ENCODE measurements at regions of chr14 and their contacts with region 1.

Region 1: DNA sequence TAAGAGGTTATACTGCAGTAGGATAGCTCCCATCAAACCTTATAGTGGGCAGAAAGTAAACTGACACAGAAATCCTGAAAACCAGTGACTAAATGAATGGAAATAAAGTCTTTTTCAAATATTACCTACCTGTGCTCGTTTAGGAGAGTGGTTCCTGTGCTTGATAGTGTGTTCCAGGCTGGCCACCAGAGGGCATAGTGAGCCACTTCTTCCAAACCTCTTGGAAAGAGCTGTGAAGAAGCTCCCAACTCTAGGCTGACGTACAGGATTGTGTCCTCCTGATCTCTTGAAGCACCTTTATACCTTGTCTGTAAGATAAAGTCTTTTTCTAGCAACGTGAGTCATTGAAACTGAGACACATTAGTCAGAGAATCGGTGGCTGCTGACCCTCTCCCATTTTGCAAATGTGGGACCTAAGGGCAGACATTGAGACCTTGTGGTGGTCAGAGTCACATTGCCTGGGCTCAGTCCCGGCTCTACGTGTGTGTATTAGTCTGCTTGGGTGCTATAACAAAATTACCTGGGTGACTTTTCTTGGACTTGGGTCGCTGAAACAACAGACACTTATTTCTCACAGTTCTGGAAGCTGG is 17.6 kb downstream of the TDP1 start:
- DNase-seq: no peak
- H3K4me3 ChIP-seq: no peak overlapping the region
- CTCF ChIP-seq: peak; percentile 92

Region 2: GRCh38 chr14:89027097-89027740 is 946.1 kb before region 1 on chr14:
- CTCF ChIA-PET with region 1: interaction called, 15 read pairs
- POLR2A ChIA-PET with region 1: no interaction called
- DNase-seq: no peak
- H3K4me3 ChIP-seq: peak overlapping the region; percentile 69
- CTCF ChIP-seq: peak; percentile 71

Region 3: DNA sequence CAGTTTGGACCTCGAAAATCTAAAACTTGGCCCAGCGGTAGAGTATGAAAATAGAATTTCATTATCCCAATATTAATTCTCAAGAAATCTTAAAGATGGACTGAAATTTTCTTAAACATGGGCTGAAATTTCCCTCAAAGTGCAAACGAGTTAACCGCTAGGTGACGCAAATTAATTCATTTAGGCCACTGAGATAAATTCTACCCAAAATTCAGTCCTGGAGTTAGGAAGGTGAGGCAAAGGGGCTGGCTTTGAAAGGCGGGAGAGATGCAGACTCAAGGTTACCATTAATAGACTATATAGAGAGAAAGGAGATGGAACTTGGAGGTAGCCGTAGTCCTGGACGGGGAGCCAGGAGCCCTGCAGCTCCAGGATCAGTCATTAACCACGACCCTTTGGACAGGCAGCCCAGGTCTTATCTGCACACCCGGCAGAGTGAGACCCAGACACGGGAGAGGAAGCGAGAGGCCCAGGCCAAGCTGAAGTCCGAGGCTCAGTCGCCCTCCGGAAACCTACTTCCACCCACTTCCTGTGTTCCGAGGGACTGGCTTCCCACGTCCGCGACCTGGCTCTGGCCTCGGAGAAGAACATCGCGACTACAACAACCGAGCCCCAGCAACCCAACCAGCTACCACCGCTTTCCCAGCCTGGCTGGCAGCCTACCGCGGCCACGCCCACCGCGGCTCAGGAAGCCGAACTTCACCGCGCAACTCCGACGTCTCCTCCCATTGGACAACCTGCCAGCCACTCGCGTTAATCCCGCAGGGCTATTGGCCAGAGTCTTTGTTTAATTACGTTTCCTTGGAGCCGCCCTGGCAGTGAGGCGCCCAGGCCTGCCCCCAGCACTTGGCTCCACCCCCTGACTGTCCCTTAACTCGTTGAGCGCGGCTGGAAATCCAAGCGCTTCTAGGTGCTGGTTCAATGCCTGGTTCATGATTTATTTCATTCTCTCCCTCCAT is 19.0 kb before region 1 on chr14 and contains the start of gene EFCAB11:
- CTCF ChIA-PET with region 1: interaction called, 164 read pairs
- POLR2A ChIA-PET with region 1: no interaction called
- DNase-seq: peak; percentile 80
- H3K4me3 ChIP-seq: peak within 1 kb of the TSS; percentile 85
- CTCF ChIP-seq: no peak

Region 4: GRCh38 chr14:89996963-89997362 is 23.6 kb after region 1 on chr14:
- CTCF ChIA-PET with region 1: interaction called, 12 read pairs
- POLR2A ChIA-PET with region 1: no interaction called
- DNase-seq: no peak
- H3K4me3 ChIP-seq: no peak overlapping the region
- CTCF ChIP-seq: no peak

Region 5: DNA sequence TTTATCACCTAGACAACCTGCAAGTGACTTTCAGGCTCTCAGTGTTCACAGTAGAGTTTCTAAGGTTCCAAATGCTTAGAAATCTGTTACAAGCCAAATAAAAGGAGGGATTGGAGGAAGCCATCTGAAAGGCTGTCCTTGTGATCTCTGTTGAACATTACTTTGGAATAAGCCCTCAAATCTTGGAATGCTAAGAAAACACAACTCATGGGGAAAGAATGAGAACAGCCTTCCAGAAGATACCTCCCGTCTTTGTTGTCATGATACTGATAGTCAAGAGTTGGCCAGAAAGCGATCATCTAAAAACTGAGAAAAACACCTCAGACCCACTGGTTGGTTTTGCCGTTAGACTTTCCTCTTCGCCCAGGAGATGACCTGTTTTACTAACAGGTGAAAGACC is 44.0 kb after region 1 on chr14:
- CTCF ChIA-PET with region 1: interaction called, 11 read pairs
- POLR2A ChIA-PET with region 1: no interaction called
- DNase-seq: no peak
- H3K4me3 ChIP-seq: no peak overlapping the region
- CTCF ChIP-seq: no peak

Region 6: GRCh38 chr14:90235179-90235976 is 262.0 kb after region 1 on chr14:
- CTCF ChIA-PET with region 1: interaction called, 347 read pairs
- POLR2A ChIA-PET with region 1: no interaction called
- DNase-seq: no peak
- H3K4me3 ChIP-seq: no peak overlapping the region
- CTCF ChIP-seq: peak; percentile 78

Region 7: DNA sequence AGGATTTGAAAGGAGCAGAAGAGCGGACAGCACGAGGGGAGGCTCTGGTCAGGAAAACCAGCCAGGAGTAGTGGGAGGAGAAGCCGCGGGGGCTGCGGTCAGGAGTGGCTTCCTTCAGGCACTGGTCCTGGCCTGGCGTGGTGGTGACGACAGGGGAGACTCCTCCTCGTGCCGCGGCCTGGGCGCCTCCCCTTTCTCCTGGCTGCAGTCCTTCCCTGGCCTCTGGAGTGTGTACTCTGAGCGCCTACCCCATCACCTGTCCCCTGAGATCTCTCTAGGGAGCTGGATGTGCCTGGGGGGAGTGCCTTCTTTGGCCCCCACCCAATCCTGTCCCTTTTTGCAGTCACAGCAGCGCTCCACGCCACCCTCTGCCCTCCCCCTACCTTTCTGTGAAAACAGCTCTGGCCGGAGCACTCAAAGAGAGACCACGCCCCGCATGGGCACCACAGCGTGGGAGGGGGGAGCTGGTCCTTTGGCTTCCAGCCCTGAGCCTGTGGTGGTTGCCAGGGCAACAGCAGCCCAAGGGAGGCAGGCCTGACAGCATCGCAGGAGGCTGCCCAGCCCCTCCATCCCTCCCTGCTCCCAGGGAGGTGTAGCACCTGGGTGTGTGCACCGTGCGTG is 549.4 kb after region 1 on chr14:
- CTCF ChIA-PET with region 1: no interaction called
- POLR2A ChIA-PET with region 1: no interaction called
- DNase-seq: no peak
- H3K4me3 ChIP-seq: no peak overlapping the region
- CTCF ChIP-seq: no peak

Measured in AG04449 (cell line).